HEK293T (cell line): ENCODE measurements at regions of chr10 and their contacts with region 1.

Region 1: GRCh38 chr10:12807096-12807755 is 194.3 kb downstream of the CCDC3 start:
- DNase-seq: no peak

Region 2: DNA sequence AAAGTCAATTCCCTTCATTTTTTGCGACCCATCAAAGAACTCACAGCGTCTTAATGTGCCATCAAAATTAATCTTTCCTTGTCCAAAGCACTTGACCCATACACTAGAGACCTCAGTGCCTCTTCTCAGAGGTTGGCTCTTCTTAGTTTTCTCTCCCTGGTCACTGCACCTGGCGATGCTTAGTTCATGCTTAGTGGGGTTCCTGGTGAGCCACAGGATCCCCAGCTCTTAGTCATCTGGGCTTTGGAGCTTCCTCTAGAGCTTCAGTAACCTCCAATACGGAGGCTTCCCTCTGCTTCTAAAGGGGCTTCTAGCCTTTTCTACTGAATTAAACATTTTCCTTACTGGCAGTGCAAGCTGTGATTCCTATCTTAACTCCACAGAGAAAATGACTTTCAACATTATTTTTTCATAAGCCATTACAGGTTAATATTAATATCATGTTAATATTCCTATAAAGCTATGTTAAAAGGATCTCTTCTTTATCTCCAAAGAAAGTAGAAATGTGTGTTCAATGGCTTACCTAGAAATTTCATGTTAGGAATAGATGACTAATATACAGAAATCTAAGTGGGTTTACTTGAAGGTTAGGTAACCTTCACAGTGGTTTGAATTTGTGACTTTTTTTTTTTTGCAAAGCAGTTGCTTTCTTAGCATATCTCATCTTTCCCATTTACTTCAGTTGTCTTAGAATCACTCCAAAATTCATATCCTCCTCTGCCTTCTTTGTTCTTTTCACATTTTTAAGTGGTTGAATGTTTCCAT is 162.7 kb before region 1 on chr10:
- CTCF ChIA-PET with region 1: no interaction called
- POLR2A ChIA-PET with region 1: no interaction called
- DNase-seq: no peak

Region 3: GRCh38 chr10:12782537-12782936 is 24.7 kb before region 1 on chr10:
- CTCF ChIA-PET with region 1: interaction called, 12 read pairs
- POLR2A ChIA-PET with region 1: no interaction called
- DNase-seq: peak; percentile 76